ENCODE measurements at regions of chrX and their contacts with region 1.

Region 1: DNA sequence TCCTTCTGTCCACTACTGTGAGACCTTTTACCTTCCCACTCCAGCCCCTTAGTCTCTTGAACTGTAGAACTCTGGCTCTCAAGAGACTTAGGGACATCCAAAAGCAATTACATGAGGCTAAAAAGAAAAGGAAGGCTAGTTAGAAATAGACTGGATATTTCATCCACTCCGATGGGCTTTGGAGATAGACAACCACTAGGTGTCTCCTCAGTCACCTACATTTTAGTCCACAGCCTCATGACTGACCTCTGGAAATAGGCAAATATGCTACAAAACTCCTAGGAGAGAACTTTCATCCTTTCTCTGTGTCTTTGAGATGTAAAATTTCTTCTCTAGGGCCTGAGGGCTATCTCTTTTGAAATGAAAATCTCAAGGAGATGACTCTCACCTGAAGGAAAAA is 45.1 kb upstream of the LAMP2 start:
- DNase-seq: peak; percentile 8
- H3K4me3 Mint-ChIP-seq: no peak overlapping the region
- H3K27ac Mint-ChIP-seq: no peak overlapping the region
- H3K4me1 Mint-ChIP-seq: peaks cover 38% of the 10 kb centered on the region
- H3K27me3 Mint-ChIP-seq: no peaks in the 10 kb centered on the region
- CTCF ChIP-seq: peak; percentile 51

Region 2: GRCh38 chrX:120603707-120604360 is 89.6 kb after region 1 on chrX and contains the start of gene MCTS1:
- CTCF ChIA-PET with region 1: no interaction called
- intact Hi-C with region 1: loop called (anchors 10 kb)
- DNase-seq: peak; percentile 85
- H3K4me3 Mint-ChIP-seq: peak within 1 kb of the TSS; percentile 83
- H3K27ac Mint-ChIP-seq: peak within 1 kb of the TSS; percentile 94
- H3K4me1 Mint-ChIP-seq: no peaks in the 10 kb centered on the region
- H3K27me3 Mint-ChIP-seq: peaks cover 1% of the 10 kb centered on the region
- CTCF ChIP-seq: no peak
- total RNA-seq, gene MCTS1: 64.7 and 67.7 TPM in 2 replicates

Region 3: DNA sequence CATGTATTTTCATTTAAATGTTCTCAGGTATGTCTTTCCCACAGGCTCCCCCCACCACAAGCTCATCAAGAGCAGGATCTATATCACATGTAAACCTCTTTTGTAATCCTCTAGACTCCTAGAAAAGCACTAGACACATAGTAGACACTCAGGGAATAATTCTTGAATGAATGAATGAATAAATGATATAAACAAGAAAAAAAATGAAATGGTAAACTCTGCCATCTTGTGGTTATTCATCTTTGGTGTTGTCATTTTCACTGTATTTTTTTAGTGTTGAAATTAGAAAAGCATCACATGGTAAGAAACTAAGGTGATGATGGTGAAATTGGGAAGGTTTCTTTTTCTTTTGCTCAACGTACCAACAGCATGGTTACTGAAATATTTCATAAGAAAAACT is 149.8 kb after region 1 on chrX:
- CTCF ChIA-PET with region 1: no interaction called
- intact Hi-C with region 1: loop called (anchors 1 kb)
- DNase-seq: no peak
- H3K4me3 Mint-ChIP-seq: no peak overlapping the region
- H3K27ac Mint-ChIP-seq: no peak overlapping the region
- H3K4me1 Mint-ChIP-seq: peaks cover 8% of the 10 kb centered on the region
- H3K27me3 Mint-ChIP-seq: no peaks in the 10 kb centered on the region
- CTCF ChIP-seq: no peak

Region 4: GRCh38 chrX:120749141-120749846 is 235.1 kb after region 1 on chrX:
- CTCF ChIA-PET with region 1: no interaction called
- intact Hi-C with region 1: no loop called
- DNase-seq: no peak
- H3K4me3 Mint-ChIP-seq: no peak overlapping the region
- H3K27ac Mint-ChIP-seq: no peak overlapping the region
- H3K4me1 Mint-ChIP-seq: no peaks in the 10 kb centered on the region
- H3K27me3 Mint-ChIP-seq: peaks cover 31% of the 10 kb centered on the region
- CTCF ChIP-seq: no peak

Region 5: DNA sequence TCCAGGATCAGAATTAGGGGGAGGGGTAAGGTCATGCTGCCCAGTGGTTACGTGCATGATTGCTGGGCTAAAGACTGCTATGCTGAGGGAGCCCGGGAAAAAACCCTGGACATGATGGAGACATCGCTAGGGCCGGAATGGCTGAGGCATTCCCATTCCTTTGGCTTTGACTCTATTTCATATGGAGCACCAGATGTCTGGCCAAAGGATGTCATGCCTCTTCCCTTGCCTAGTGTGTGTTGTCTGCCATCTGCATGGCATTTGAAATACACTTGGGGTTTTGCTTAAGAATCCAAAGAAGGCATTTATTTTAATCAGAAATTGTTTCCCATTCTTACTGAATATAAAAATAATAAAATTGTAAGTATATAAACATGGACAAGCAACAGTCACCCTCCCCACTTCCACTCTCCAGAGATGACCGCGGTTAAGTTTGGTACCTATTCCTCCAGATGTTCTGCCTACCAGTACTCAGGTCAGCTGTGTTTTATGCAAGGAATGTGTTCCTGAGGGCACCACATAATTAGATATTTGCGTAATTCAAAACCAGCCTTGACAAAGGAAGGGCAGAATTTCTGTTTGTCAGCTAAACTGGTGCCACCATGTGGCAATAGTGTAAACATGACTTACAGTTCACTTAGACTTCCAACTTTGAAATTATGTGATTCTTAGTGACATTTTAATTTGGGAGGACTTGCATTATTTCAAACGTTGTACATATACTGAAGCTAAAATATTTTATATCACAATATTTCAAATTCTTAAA is 255.5 kb after region 1 on chrX:
- CTCF ChIA-PET with region 1: no interaction called
- intact Hi-C with region 1: loop called (anchors 5 kb)
- DNase-seq: peak; percentile 19
- H3K4me3 Mint-ChIP-seq: no peak overlapping the region
- H3K27ac Mint-ChIP-seq: no peak overlapping the region
- H3K4me1 Mint-ChIP-seq: peaks cover 6% of the 10 kb centered on the region
- H3K27me3 Mint-ChIP-seq: no peaks in the 10 kb centered on the region
- CTCF ChIP-seq: no peak